IMR-90 (cell line): ENCODE measurements at regions of chr2 and their contacts with region 1.

Region 1: GRCh38 chr2:164717000-164717803 is 95.9 kb upstream of the GRB14 start:
- DNase-seq: peak; percentile 35
- ATAC-seq: no peak
- H3K4me3 ChIP-seq: no peak overlapping the region
- H3K27ac ChIP-seq: no peak overlapping the region
- H3K4me1 ChIP-seq: no peaks in the 10 kb centered on the region
- H3K27me3 ChIP-seq: no peaks in the 10 kb centered on the region
- CTCF ChIP-seq: peak; percentile 70
- POLR2A ChIP-seq: no peak
- RAD21 ChIP-seq: peak; percentile 57

Region 2: GRCh38 chr2:164560181-164560792 is 156.9 kb before region 1 on chr2:
- CTCF ChIA-PET with region 1: interaction called, 7 read pairs
- POLR2A ChIA-PET with region 1: no interaction called
- dilution Hi-C with region 1: no loop called
- in situ Hi-C with region 1: loop called (anchors 10 kb)
- intact Hi-C with region 1: loop called (anchors 1 kb)
- DNase-seq: peak; percentile 16
- ATAC-seq: peak; percentile 48; the same call in 1 of the 2 replicates
- H3K4me3 ChIP-seq: no peak overlapping the region
- H3K27ac ChIP-seq: no peak overlapping the region
- H3K4me1 ChIP-seq: no peaks in the 10 kb centered on the region
- H3K27me3 ChIP-seq: no peaks in the 10 kb centered on the region
- CTCF ChIP-seq: peak; percentile 69
- POLR2A ChIP-seq: no peak
- RAD21 ChIP-seq: peak; percentile 27

Region 3: DNA sequence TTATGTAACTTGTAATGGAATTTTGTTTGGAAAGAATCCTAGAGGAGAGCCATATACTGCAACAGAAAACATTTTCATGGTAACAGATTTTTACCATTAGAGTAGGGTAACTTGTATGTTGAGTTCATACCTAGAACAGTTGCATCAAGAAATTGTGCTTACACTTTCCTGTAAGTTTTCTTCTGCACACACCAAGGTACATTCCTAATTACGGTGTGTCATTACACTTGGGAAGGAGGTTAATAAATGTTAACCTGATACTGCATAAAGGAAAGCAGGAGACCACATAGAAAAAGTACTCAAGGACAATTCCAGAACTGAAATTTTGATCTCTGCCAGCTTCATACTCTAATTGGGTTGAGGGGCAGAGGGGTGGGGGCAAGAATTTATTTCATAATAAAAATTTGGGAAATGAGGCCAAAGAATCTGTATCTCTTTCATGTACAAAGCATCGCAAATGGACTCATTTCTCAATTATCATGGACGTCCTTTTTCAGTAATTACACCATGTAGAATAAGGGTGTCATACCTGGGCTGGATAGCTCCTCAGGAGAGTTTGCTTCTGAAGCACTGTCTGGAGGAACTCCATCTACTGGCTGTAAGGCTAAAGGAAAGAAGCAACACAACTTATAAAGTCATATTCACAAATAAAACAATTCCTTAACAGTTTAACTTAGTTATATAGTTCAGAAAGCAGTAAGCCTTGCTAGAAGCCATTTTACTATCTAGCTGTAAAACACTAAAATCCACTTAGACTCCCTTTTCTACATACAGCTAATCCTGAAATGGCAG is 13.1 kb before region 1 on chr2:
- CTCF ChIA-PET with region 1: interaction called, 10 read pairs
- POLR2A ChIA-PET with region 1: no interaction called
- dilution Hi-C with region 1: no loop called
- in situ Hi-C with region 1: no loop called
- intact Hi-C with region 1: no loop called
- DNase-seq: no peak
- ATAC-seq: no peak
- H3K4me3 ChIP-seq: no peak overlapping the region
- H3K27ac ChIP-seq: no peak overlapping the region
- H3K4me1 ChIP-seq: no peaks in the 10 kb centered on the region
- H3K27me3 ChIP-seq: no peaks in the 10 kb centered on the region
- CTCF ChIP-seq: no peak
- POLR2A ChIP-seq: no peak
- RAD21 ChIP-seq: no peak